Right lobe of liver (tissue), 6 donors: ENCODE measurements at regions of chr12 and their contacts with region 1.

Region 1: GRCh38 chr12:120640840-120641833 is 711 bp downstream of the CABP1 start:
- DNase-seq: peak in 2 of 3 donors; percentile 69 to 74
- ATAC-seq: peak; percentile 81 to 92 (median 86)
- H3K4me3 ChIP-seq: peak overlapping the region; percentile 30 to 39 (median 32)
- H3K27ac ChIP-seq: no peak overlapping the region
- H3K4me1 ChIP-seq: peaks cover 0 to 9% (median 0%) of the 10 kb centered on the region in 4 donors
- H3K27me3 ChIP-seq: peaks cover 0 to 28% of the 10 kb centered on the region in 2 donors
- CTCF ChIP-seq: no peak
- POLR2A ChIP-seq: no peak

Region 2: DNA sequence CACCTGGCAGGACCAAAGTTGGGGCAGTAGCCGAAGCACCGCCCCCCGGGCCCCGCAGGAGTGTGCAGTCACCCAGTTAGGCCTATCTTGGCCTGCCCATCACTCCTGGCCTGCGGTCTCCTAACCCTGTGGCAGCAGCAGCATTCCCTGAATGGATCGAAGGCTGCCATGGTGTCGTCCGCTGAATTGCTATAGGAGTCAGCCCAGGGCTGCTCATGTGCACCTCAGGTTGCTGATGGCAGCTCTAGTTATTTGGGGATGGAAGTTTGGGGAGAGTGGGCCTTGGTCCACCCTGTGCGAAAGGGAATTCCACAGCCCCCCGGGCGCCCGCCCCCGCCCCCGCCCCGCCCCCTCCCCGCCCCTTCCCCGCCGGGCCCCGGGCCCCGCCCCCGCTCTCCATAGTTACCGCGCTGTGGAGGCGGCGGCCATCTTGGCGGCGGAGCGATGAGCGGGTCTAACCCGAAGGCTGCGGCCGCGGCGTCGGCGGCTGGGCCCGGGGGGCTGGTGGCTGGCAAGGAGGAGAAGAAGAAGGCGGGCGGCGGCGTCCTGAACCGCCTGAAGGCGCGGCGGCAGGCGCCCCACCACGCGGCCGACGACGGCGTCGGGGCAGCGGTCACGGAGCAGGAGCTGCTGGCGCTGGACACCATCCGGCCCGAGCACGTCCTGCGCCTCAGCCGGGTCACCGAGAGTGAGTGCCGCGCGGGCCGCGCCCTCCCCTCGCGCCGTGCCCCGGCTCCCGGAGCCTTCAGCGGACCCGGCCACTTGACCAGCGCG is 69.1 kb after region 1 on chr12 and contains the start of gene UNC119B:
- intact Hi-C with region 1: loop called in 1 of 2 experiments (anchors 10 kb)
- DNase-seq: peak; percentile 79 to 83 (median 82)
- ATAC-seq: peak; percentile 76 to 89 (median 84)
- H3K4me3 ChIP-seq: peak within 1 kb of the TSS; percentile 87 to 97 (median 93)
- H3K27ac ChIP-seq: peak within 1 kb of the TSS; percentile 59 to 81 (median 73)
- H3K4me1 ChIP-seq: peaks cover 0 to 24% (median 3%) of the 10 kb centered on the region in 4 donors
- H3K27me3 ChIP-seq: no peaks in the 10 kb centered on the region
- CTCF ChIP-seq: no peak
- POLR2A ChIP-seq: no peak
- total RNA-seq, gene UNC119B: 4.7 to 10.2 (median 6.6) TPM

Region 3: DNA sequence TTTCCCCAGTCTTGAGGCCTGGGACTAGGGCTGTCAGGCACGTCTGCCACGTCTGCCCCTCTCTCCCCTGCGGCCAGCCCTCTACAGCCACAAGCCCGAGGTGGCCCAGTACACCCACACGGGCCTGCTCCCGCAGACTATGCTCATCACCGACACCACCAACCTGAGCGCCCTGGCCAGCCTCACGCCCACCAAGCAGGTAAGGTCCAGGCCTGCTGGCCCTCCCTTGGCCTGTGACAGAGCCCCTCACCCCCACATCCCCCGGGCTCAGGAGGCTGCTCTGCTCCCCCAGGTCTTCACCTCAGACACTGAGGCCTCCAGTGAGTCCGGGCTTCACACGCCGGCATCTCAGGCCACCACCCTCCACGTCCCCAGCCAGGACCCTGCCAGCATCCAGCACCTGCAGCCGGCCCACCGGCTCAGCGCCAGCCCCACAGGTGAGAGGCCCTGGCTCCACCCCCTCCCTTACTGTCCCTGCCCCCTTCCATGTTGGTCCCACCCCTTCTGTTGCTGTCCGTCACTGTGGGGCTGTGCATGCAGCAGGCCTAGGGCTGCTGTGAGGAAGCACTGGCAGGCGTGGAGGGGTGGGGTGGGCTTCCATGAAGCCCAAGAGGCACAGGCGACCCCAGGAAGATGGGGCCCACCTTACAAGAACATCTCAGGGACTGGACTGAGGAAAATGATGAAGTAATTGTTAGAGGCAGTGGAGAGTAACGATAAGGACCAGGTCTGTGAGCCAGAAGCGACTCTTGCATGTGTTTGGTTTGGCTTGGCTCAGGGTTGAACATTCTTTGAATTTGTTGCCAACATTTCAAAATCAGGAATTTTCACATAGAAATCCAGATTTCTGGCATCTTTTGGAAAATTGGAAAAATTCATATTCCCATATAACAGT is 358.3 kb after region 1 on chr12:
- intact Hi-C with region 1: loop called in 1 of 2 experiments (anchors 10 kb)
- DNase-seq: no peak
- ATAC-seq: peak; percentile 47 to 65 (median 54)
- H3K4me3 ChIP-seq: no peak overlapping the region
- H3K27ac ChIP-seq: no peak overlapping the region
- H3K4me1 ChIP-seq: peaks cover 0 to 14% (median 7%) of the 10 kb centered on the region in 4 donors
- H3K27me3 ChIP-seq: no peaks in the 10 kb centered on the region
- CTCF ChIP-seq: no peak
- POLR2A ChIP-seq: no peak